K562 (cell line): ENCODE measurements at regions of chr5 and their contacts with region 1.

Region 1: DNA sequence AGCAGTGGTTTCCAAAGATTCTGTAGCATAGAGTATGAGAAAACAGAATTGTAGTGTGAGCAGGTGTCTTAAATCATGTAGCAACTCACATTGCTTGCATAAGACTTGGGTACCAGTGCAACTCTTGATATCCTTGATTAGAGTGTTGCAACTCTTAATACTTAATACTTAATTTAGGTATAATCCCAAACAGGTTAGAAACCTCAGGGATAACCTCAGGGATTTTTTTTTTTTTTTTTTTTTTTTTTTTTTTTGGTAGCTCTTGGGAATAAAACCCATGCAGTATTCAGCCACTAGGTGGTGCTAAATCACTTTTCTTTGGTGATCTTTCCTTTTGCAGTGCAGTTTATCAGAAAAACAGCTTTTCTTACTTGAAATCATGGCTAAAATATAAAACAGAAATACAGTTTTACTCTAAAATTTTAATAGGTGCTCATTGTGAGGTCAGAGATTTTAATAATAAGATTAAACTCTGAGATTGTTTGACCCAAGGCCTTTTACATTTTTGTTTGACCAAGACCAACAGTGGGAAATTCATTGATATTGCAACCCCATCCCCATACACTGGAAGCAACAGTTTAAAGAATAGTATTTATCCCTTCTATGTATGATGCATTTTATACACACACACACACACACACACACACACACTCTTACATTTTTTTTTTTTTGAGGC is 55.3 kb downstream of the ERAP1 start:
- DNase-seq: peak; percentile 47 to 76 (median 49)
- ATAC-seq: peak; percentile 68; the same call in 2 of the 3 replicates
- H3K4me3 ChIP-seq: no peak overlapping the region
- H3K27ac ChIP-seq: no peak overlapping the region
- H3K4me1 ChIP-seq: no peaks in the 10 kb centered on the region
- H3K27me3 ChIP-seq: no peaks in the 10 kb centered on the region
- CTCF ChIP-seq: peak; percentile 41 to 74 (median 42); a peak in 4 of 6 replicates
- EP300 ChIP-seq: no peak
- POLR2A ChIP-seq: no peak
- RAD21 ChIP-seq: peak; percentile 50 to 55

Region 2: GRCh38 chr5:96439477-96440184 is 312.8 kb before region 1 on chr5:
- CTCF ChIA-PET with region 1: no interaction called
- POLR2A ChIA-PET with region 1: no interaction called
- in situ Hi-C with region 1: no loop called
- intact Hi-C with region 1: no loop called
- DNase-seq: no peak
- ATAC-seq: no peak
- H3K4me3 ChIP-seq: no peak overlapping the region
- H3K27ac ChIP-seq: no peak overlapping the region
- H3K4me1 ChIP-seq: no peaks in the 10 kb centered on the region
- H3K27me3 ChIP-seq: no peaks in the 10 kb centered on the region
- CTCF ChIP-seq: 0 out of 6 replicates have a peak, but pooled peaks of 1 of the 3 experiments have one; percentile 2
- EP300 ChIP-seq: no peak
- POLR2A ChIP-seq: no peak
- RAD21 ChIP-seq: no peak

Region 3: DNA sequence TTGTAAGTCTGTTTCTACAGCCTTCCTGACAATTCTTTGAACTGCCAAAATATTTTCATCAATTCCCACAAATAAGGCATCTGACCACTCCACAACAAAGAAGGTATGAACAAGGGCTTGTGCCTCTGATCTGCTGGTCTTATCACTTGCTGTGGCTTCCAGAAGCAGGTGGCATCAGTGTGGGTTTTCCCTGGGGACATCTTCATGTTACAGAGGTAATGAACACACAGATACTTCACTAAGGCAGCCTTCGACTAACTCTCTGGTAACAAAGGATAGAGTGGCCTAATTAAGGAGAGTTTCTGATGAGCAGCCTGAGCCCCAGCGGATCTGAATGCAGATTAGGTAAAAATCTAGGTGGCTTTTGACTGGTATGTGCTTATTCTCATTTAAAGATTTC is 108.6 kb after region 1 on chr5:
- CTCF ChIA-PET with region 1: no interaction called
- POLR2A ChIA-PET with region 1: no interaction called
- in situ Hi-C with region 1: no loop called
- intact Hi-C with region 1: loop called (anchors 5 kb)
- DNase-seq: no peak
- ATAC-seq: no peak
- H3K4me3 ChIP-seq: no peak overlapping the region
- H3K27ac ChIP-seq: no peak overlapping the region
- H3K4me1 ChIP-seq: no peaks in the 10 kb centered on the region; a peak in 1 of 5 replicates
- H3K27me3 ChIP-seq: no peaks in the 10 kb centered on the region
- CTCF ChIP-seq: no peak
- EP300 ChIP-seq: no peak
- POLR2A ChIP-seq: no peak
- RAD21 ChIP-seq: no peak